Left ventricle myocardium inferior (tissue), 1 donor: ENCODE measurements at regions of chr4 and their contacts with region 1.

Region 1: GRCh38 chr4:78775303-78776030 is 683 bp upstream of the BMP2K start:
- DNase-seq: peak; percentile 87
- H3K4me3 ChIP-seq: peak overlapping the region; percentile 90
- H3K27ac ChIP-seq: peak overlapping the region; percentile 99
- H3K4me1 ChIP-seq: peaks cover 52% of the 10 kb centered on the region
- H3K27me3 ChIP-seq: no peaks in the 10 kb centered on the region
- CTCF ChIP-seq: no peak

Region 2: DNA sequence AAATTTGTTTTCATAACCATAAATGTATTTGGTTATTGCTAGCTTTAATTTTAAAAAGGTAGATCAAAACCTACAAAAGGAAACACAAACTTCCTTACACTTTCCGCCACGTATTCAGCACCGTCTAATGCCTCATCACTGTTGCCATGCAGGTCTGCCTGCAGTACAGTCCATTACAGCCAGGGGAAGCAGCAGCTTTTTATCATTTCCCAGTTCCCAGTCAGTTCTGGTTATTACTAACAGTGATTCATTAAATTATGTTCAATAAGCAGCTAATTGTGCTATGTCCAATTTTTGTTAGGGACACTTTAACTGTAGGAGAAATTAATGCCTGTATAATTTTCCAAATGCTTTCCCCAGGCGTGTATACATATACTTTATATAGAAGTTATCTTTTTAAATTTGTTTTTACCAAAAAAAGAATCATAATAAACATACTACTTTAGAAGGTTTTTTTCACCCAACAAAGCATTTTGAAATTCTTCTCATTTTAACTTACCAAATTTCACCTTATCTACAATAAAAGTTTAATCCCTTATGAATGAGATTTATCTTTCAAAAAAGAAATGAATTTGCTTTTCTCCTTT is 130.6 kb before region 1 on chr4:
- intact Hi-C with region 1: loop called (anchors 10 kb)
- DNase-seq: peak; percentile 50
- H3K4me3 ChIP-seq: no peak overlapping the region
- H3K27ac ChIP-seq: peak overlapping the region; percentile 77
- H3K4me1 ChIP-seq: peaks cover 33% of the 10 kb centered on the region
- H3K27me3 ChIP-seq: no peaks in the 10 kb centered on the region
- CTCF ChIP-seq: peak; percentile 96